ENCODE measurements at regions of chr1 and their contacts with region 1.

Region 1: GRCh38 chr1:160681067-160681890 is 30.3 kb downstream of the CD48 start:
- DNase-seq: peak; percentile 80
- H3K4me3 Mint-ChIP-seq: no peak overlapping the region
- H3K27ac Mint-ChIP-seq: peak overlapping the region; percentile 94
- H3K4me1 Mint-ChIP-seq: peaks cover 66% of the 10 kb centered on the region
- H3K27me3 Mint-ChIP-seq: no peaks in the 10 kb centered on the region

Region 2: DNA sequence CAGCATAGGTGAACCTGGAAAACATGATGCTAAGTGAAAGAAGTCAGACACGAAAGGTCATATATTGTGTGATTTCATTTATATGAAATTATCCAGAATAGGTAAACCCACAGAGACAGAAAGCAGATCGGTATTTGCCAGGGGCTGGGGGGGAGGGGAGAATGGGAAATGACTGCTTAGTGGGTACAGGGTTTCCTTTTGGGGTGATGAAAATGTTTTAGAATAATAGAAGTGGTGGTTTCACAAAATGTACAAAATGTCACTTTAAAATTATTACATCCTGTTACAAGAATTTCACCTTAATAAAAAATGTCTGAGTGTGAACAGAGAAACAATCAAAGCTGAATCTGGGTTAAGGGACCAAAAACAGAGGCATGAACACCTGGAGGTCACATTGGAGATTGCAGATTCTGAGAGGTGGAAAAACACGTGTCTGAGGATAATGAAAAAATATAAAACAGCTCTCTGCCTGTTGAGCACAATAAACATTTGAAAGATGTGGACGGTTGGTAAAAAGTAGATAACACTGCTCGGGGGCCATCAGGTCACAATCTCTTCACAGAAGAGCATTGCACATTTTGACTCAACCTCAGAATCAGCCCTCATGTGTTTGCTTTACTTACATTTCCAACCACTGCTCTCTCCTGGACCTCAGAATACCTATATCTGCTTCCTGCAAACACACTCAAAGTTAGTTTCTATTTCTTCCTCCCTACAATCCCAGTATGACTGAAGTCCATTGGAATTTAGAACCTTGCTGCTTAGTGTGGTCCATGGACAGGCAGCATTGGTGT is 161.4 kb before region 1 on chr1:
- intact Hi-C with region 1: no loop called
- DNase-seq: peak; percentile 31
- H3K4me3 Mint-ChIP-seq: peak overlapping the region; percentile 85
- H3K27ac Mint-ChIP-seq: peak overlapping the region; percentile 97
- H3K4me1 Mint-ChIP-seq: peaks cover 69% of the 10 kb centered on the region
- H3K27me3 Mint-ChIP-seq: no peaks in the 10 kb centered on the region

Region 3: GRCh38 chr1:160711602-160712311 is 30.5 kb after region 1 on chr1 and contains the start of gene CD48:
- intact Hi-C with region 1: loop called (anchors 1 kb)
- DNase-seq: peak; percentile 56
- H3K4me3 Mint-ChIP-seq: no peak within 1 kb of the TSS
- H3K27ac Mint-ChIP-seq: no peak within 1 kb of the TSS
- H3K4me1 Mint-ChIP-seq: peaks cover 29% of the 10 kb centered on the region
- H3K27me3 Mint-ChIP-seq: no peaks in the 10 kb centered on the region
- total RNA-seq, gene CD48: 101 and 103 TPM in 2 replicates

Region 4: DNA sequence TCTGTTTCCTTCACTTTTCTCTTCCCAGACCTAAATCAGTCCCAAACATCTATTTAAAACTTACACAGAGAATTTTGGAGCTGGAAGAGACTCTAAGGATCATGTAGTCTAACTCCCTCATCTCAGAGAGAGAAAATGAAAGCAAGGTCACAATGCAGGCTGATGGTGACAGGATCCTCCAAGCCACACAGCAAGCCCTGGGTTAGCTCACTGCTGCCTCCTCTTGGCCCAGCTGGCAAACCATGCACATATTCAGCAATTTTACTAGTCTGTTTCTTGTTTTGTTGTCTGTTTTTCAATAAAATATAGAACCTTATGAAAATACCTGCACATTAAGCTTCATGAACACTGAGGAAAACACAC is 87.0 kb after region 1 on chr1:
- intact Hi-C with region 1: loop called (anchors 1 kb)
- DNase-seq: peak; percentile 80
- H3K4me3 Mint-ChIP-seq: peak overlapping the region; percentile 78
- H3K27ac Mint-ChIP-seq: peak overlapping the region; percentile 92
- H3K4me1 Mint-ChIP-seq: peaks cover 29% of the 10 kb centered on the region
- H3K27me3 Mint-ChIP-seq: no peaks in the 10 kb centered on the region

Region 5: GRCh38 chr1:160877221-160877620 is 195.9 kb after region 1 on chr1:
- intact Hi-C with region 1: loop called (anchors 5 kb)
- DNase-seq: no peak
- H3K4me3 Mint-ChIP-seq: no peak overlapping the region
- H3K27ac Mint-ChIP-seq: no peak overlapping the region
- H3K4me1 Mint-ChIP-seq: peaks cover 10% of the 10 kb centered on the region
- H3K27me3 Mint-ChIP-seq: peaks cover 5% of the 10 kb centered on the region

Region 6: GRCh38 chr1:161111527-161111926 is 430.2 kb after region 1 on chr1:
- intact Hi-C with region 1: loop called (anchors 5 kb)
- DNase-seq: no peak
- H3K4me3 Mint-ChIP-seq: no peak overlapping the region
- H3K27ac Mint-ChIP-seq: peak overlapping the region; percentile 62
- H3K4me1 Mint-ChIP-seq: peaks cover 43% of the 10 kb centered on the region
- H3K27me3 Mint-ChIP-seq: no peaks in the 10 kb centered on the region